Activated T-helper 1 cell treated with anti-CD3 and anti-CD28 coated beads, Interleukin-12 subunit alpha, Interleukin-12 subunit beta, Interleukin-2, Interleukin-4 antibody, amounts not matched to agents 30 ng/mL and 10 ng/mL and 1 ng/mL, durations not matched to agents 14 hours and 24 hours and 36 hours (primary cell): ENCODE measurements at regions of chr5 and their contacts with region 1.

Region 1: GRCh38 chr5:58886315-58887207 is 303.7 kb downstream of the RAB3C start:
- DNase-seq: peak; percentile 58
- H3K4me3 Mint-ChIP-seq: peak overlapping the region; percentile 49
- H3K27ac Mint-ChIP-seq: peak overlapping the region; percentile 87
- H3K4me1 Mint-ChIP-seq: peaks cover 40% of the 10 kb centered on the region
- H3K27me3 Mint-ChIP-seq: peaks cover 9% of the 10 kb centered on the region

Region 2: DNA sequence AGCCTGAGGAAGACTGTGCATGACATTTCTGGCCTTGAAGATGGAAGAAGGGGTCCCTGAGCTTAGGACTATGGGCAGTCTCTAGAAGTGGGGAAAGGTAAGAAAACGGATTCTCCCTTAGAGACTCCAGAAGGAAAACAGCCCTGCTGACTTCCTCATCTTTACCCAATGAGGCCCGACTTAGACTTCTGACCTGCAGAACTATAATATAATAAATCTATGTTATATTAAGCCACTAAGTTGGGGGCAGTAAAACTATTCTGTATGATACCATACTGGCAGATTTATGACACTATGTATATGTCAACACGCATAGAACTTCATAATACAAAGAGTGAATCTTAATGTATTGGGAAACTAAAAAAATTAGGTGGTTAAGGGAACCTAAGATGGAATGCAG is 848.7 kb before region 1 on chr5:
- intact Hi-C with region 1: no loop called
- DNase-seq: no peak
- H3K4me3 Mint-ChIP-seq: no peak overlapping the region
- H3K27ac Mint-ChIP-seq: no peak overlapping the region
- H3K4me1 Mint-ChIP-seq: no peaks in the 10 kb centered on the region
- H3K27me3 Mint-ChIP-seq: no peaks in the 10 kb centered on the region

Region 3: GRCh38 chr5:58551492-58551891 is 335.1 kb before region 1 on chr5:
- intact Hi-C with region 1: no loop called
- DNase-seq: no peak
- H3K4me3 Mint-ChIP-seq: no peak overlapping the region
- H3K27ac Mint-ChIP-seq: no peak overlapping the region
- H3K4me1 Mint-ChIP-seq: no peaks in the 10 kb centered on the region
- H3K27me3 Mint-ChIP-seq: no peaks in the 10 kb centered on the region

Region 4: GRCh38 chr5:58902765-58903164 is 16.2 kb after region 1 on chr5:
- intact Hi-C with region 1: no loop called
- DNase-seq: no peak
- H3K4me3 Mint-ChIP-seq: no peak overlapping the region
- H3K27ac Mint-ChIP-seq: no peak overlapping the region
- H3K4me1 Mint-ChIP-seq: no peaks in the 10 kb centered on the region
- H3K27me3 Mint-ChIP-seq: no peaks in the 10 kb centered on the region

Region 5: GRCh38 chr5:58933891-58934628 is 47.5 kb after region 1 on chr5:
- intact Hi-C with region 1: loop called (anchors 2 kb)
- DNase-seq: no peak
- H3K4me3 Mint-ChIP-seq: no peak overlapping the region
- H3K27ac Mint-ChIP-seq: no peak overlapping the region
- H3K4me1 Mint-ChIP-seq: peaks cover 13% of the 10 kb centered on the region
- H3K27me3 Mint-ChIP-seq: no peaks in the 10 kb centered on the region

Region 6: DNA sequence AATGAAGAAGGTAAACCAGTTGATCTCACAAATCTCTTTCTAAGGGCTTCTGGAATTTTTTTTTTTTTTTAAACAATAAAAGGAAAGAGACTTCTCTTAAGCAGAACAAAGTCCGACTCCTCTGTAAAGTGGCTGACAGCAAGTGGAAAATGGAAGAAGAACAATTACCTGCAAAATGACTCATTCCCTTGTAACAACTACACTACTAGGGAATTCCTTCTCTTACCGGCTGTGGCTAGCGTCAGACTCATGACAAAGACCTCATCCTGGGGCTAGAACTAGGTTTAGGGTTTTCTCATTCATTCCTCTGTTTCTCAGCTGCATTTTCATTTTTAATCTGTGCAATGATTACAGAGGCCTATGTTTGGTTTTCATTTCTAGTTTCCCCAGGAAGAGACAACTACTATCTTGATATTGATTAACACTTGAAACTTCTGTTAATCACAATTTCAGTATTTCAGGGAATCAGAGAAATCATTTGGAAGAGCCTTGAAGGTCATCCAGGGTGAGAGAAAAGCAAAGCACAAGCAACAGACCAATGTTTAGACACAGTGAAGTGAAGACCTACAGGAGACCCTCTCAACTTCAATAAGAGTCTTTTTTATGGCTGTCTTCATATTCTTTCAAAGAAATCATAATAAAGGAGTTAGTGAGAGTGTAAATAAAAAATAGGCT is 134.2 kb after region 1 on chr5:
- intact Hi-C with region 1: loop called (anchors 1 kb)
- DNase-seq: no peak
- H3K4me3 Mint-ChIP-seq: peak overlapping the region; percentile 15
- H3K27ac Mint-ChIP-seq: peak overlapping the region; percentile 94
- H3K4me1 Mint-ChIP-seq: peaks cover 75% of the 10 kb centered on the region
- H3K27me3 Mint-ChIP-seq: no peaks in the 10 kb centered on the region

Region 7: GRCh38 chr5:59126708-59127573 is 240.4 kb after region 1 on chr5:
- intact Hi-C with region 1: loop called (anchors 2 kb)
- DNase-seq: no peak
- H3K4me3 Mint-ChIP-seq: no peak overlapping the region
- H3K27ac Mint-ChIP-seq: no peak overlapping the region
- H3K4me1 Mint-ChIP-seq: peaks cover 14% of the 10 kb centered on the region
- H3K27me3 Mint-ChIP-seq: no peaks in the 10 kb centered on the region

Region 8: DNA sequence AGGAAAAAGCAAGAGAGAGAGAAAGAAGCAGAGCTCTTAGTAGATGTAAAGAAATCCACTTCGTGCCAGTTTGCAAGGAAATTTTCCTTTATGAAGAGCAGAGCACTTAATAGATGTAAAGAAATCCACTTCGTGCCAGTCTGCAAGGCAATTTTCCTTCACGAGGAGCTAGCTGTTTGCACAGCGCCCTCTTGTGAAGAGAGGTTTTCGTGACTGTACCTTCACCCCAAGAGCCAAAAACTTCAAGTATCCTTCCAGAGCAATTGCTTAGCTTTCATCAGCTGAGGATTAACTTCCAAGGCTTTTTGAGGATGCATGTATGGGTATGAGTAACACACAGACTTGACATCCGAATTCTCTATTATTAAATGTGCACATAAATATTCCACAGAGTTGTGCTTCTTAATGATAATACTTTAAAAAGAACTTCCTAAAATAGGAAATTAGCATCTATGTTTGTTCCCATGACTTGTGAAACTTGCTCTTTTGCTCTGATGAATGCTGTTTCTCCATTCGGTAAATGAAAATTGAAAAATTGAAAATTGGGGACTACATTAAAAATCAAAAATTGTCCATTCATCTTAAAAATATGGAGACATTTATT is 481.3 kb after region 1 on chr5:
- intact Hi-C with region 1: loop called (anchors 1 kb)
- DNase-seq: no peak
- H3K4me3 Mint-ChIP-seq: no peak overlapping the region
- H3K27ac Mint-ChIP-seq: no peak overlapping the region
- H3K4me1 Mint-ChIP-seq: no peaks in the 10 kb centered on the region
- H3K27me3 Mint-ChIP-seq: peaks cover 27% of the 10 kb centered on the region

Region 9: DNA sequence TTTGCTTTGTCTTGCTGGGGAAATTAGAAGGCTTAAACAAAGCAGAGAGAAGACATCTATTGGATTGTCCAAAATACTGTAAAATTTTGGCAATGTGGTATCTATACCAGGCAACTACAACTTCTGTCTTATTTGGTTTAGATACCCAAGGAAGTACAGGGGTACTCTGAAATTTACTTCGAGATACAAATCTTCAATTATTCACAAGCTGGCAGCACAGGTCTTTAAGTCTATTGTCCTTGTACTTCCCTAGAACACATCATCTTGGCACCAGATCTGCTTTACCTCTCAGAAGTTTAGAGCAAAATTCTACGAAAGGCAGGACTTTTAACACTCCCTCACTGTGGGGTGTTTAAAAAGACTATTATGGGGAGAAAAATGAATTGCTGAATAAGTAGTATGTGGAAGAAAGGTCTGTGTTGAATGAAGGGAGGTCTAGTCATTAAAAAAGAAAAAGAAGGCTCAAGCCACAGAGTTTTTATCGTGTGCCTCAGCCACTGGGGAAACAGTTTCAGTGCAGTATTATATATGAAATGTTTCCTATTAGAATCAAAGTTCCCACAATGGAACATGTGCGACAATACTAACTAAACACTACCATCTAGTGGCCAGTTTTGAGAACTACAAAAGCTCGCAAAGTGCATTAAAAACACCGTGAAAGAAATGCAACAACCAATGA is 913.2 kb after region 1 on chr5:
- intact Hi-C with region 1: loop called (anchors 10 kb)
- DNase-seq: peak; percentile 15
- H3K4me3 Mint-ChIP-seq: no peak overlapping the region
- H3K27ac Mint-ChIP-seq: no peak overlapping the region
- H3K4me1 Mint-ChIP-seq: no peaks in the 10 kb centered on the region
- H3K27me3 Mint-ChIP-seq: peaks cover 11% of the 10 kb centered on the region